ENCODE measurements at regions of chr3 and their contacts with region 1.

Region 1: DNA sequence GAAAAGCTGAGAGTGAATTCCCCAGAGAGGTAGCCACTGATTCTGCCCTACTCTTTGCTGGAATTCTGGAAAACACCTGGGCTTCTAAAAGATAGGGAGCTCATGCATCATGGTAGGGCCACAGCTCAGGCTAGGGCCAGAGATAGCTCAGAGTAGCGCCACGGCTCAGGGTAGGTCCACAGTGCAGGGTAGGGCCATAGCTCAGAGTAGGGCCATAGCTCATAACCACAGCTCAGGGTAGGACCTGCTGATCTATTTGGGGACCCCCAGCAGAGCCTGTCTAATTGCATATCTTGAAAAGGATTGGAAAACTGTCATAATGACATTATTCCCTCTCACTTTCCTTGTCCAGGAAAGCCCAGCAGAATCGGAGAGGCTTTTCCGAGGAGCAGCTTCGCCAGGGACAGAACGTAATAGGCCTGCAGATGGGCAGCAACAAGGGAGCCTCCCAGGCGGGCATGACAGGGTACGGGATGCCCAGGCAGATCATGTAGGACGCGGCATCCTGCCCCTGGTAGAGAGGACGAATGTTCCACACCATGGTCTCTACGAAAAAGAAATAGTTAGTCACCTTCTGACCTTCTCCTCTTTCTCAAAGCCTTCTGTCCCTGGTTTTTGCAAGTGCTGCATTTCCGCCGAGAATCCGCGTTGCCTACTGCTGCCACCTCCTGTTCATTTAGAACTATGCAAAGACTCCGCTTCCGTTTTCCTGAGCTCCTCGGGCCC is 14.5 kb downstream of the TAGLN3 start:
- DNase-seq: peak; percentile 59 to 67
- H3K4me3 ChIP-seq: no peak overlapping the region
- H3K27ac ChIP-seq: no peak overlapping the region
- H3K4me1 ChIP-seq: no peaks in the 10 kb centered on the region
- H3K27me3 ChIP-seq: no peaks in the 10 kb centered on the region
- CTCF ChIP-seq: peak; percentile 66 to 84 (median 73)
- EP300 ChIP-seq: no peak
- POLR2A ChIP-seq: no peak
- RAD21 ChIP-seq: peak; percentile 86 to 87

Region 2: GRCh38 chr3:111668912-111669488 is 344.2 kb before region 1 on chr3:
- CTCF ChIA-PET with region 1: interaction called, 11 read pairs
- POLR2A ChIA-PET with region 1: no interaction called
- DNase-seq: no peak
- H3K4me3 ChIP-seq: no peak overlapping the region
- H3K27ac ChIP-seq: no peak overlapping the region
- H3K4me1 ChIP-seq: peaks cover 0 to 2% (median 0%) of the 10 kb centered on the region in 4 experiments; a peak in 1 of 7 replicates
- H3K27me3 ChIP-seq: peaks cover 0 to 9% (median 6%) of the 10 kb centered on the region in 4 experiments; a peak in 6 of 7 replicates
- CTCF ChIP-seq: peak in 2 of 3 experiments; percentile 65 to 75; a peak in 3 of 4 replicates
- EP300 ChIP-seq: no peak
- POLR2A ChIP-seq: no peak
- RAD21 ChIP-seq: peak; percentile 81 to 89

Region 3: GRCh38 chr3:111932946-111933345 is 80.3 kb before region 1 on chr3:
- CTCF ChIA-PET with region 1: no interaction called
- POLR2A ChIA-PET with region 1: no interaction called
- DNase-seq: no peak
- H3K4me3 ChIP-seq: no peak overlapping the region
- H3K27ac ChIP-seq: no peak overlapping the region
- H3K4me1 ChIP-seq: peaks cover 0 to 2% (median 0%) of the 10 kb centered on the region in 4 experiments; a peak in 1 of 7 replicates
- H3K27me3 ChIP-seq: no peaks in the 10 kb centered on the region
- CTCF ChIP-seq: no peak
- EP300 ChIP-seq: no peak
- POLR2A ChIP-seq: no peak
- RAD21 ChIP-seq: no peak

Region 4: GRCh38 chr3:111956995-111957734 is 56.1 kb before region 1 on chr3:
- CTCF ChIA-PET with region 1: interaction called, 11 read pairs
- POLR2A ChIA-PET with region 1: no interaction called
- DNase-seq: peak in 1 of 2 experiments; percentile 10
- H3K4me3 ChIP-seq: peak overlapping the region in 1 of 4 experiments; percentile 33; a peak in 2 of 8 replicates
- H3K27ac ChIP-seq: no peak overlapping the region
- H3K4me1 ChIP-seq: peaks cover 0 to 15% (median 11%) of the 10 kb centered on the region in 4 experiments; a peak in 4 of 7 replicates
- H3K27me3 ChIP-seq: peaks cover 0 to 11% (median 10%) of the 10 kb centered on the region in 4 experiments; a peak in 5 of 7 replicates
- CTCF ChIP-seq: no peak
- EP300 ChIP-seq: no peak
- POLR2A ChIP-seq: no peak
- RAD21 ChIP-seq: no peak

Region 5: GRCh38 chr3:111978493-111979433 is 34.5 kb before region 1 on chr3 and contains the start of gene ABHD10:
- CTCF ChIA-PET with region 1: interaction called, 11 read pairs
- POLR2A ChIA-PET with region 1: interaction called, 9 read pairs
- DNase-seq: peak; percentile 93 to 95
- H3K4me3 ChIP-seq: peak within 1 kb of the TSS; percentile 80 to 91 (median 84)
- H3K27ac ChIP-seq: peak within 1 kb of the TSS; percentile 72
- H3K4me1 ChIP-seq: no peaks in the 10 kb centered on the region
- H3K27me3 ChIP-seq: no peaks in the 10 kb centered on the region
- CTCF ChIP-seq: no peak
- EP300 ChIP-seq: no peak
- POLR2A ChIP-seq: peak; percentile 86 to 93
- RAD21 ChIP-seq: no peak
- total RNA-seq, gene ABHD10: 24.6 and 27.5 TPM in 2 replicates

Region 6: GRCh38 chr3:111998636-111999483 is 14.4 kb before region 1 on chr3 and contains the start of gene TAGLN3:
- CTCF ChIA-PET with region 1: interaction called, 384 read pairs
- POLR2A ChIA-PET with region 1: interaction called, 22 read pairs
- DNase-seq: peak in 1 of 2 experiments; percentile 77
- H3K4me3 ChIP-seq: peak within 1 kb of the TSS; percentile 63 to 77 (median 72)
- H3K27ac ChIP-seq: 0 out of 2 replicates have a peak within 1 kb of the TSS, but pooled peaks have one; percentile 5
- H3K4me1 ChIP-seq: peaks cover 3 to 10% (median 6%) of the 10 kb centered on the region in 4 experiments; a peak in 5 of 7 replicates
- H3K27me3 ChIP-seq: peaks cover 0 to 22% (median 9%) of the 10 kb centered on the region in 4 experiments; a peak in 3 of 7 replicates
- CTCF ChIP-seq: no peak
- EP300 ChIP-seq: no peak
- POLR2A ChIP-seq: peak in 1 of 2 experiments; percentile 31; a peak in 2 of 3 replicates
- RAD21 ChIP-seq: no peak
- total RNA-seq, gene TAGLN3: 7.2 and 7.5 TPM in 2 replicates

Region 7: GRCh38 chr3:112043603-112044201 is 30.5 kb after region 1 on chr3:
- CTCF ChIA-PET with region 1: interaction called, 47 read pairs
- POLR2A ChIA-PET with region 1: no interaction called
- DNase-seq: peak in 1 of 2 experiments; percentile 5
- H3K4me3 ChIP-seq: no peak overlapping the region
- H3K27ac ChIP-seq: no peak overlapping the region
- H3K4me1 ChIP-seq: peaks cover 0 to 4% (median 1%) of the 10 kb centered on the region in 4 experiments; a peak in 4 of 7 replicates
- H3K27me3 ChIP-seq: no peaks in the 10 kb centered on the region
- CTCF ChIP-seq: peak; percentile 76 to 82 (median 79)
- EP300 ChIP-seq: no peak
- POLR2A ChIP-seq: no peak
- RAD21 ChIP-seq: peak; percentile 81 to 86

Measured in H1 (cell line).